Ovary (tissue), 10 donors: ENCODE measurements at regions of chr12 and their contacts with region 1.

Region 1: GRCh38 chr12:14854586-14855183 is 11.4 kb upstream of the ART4 start:
- DNase-seq: no peak
- H3K4me3 ChIP-seq: no peak overlapping the region
- H3K27ac ChIP-seq: peak overlapping the region in 1 of 2 donors; percentile 16
- H3K4me1 ChIP-seq: peaks cover 5% of the 10 kb centered on the region
- H3K27me3 ChIP-seq: no peaks in the 10 kb centered on the region
- CTCF ChIP-seq: no peak
- EP300 ChIP-seq: no peak
- POLR2A ChIP-seq: no peak

Region 2: DNA sequence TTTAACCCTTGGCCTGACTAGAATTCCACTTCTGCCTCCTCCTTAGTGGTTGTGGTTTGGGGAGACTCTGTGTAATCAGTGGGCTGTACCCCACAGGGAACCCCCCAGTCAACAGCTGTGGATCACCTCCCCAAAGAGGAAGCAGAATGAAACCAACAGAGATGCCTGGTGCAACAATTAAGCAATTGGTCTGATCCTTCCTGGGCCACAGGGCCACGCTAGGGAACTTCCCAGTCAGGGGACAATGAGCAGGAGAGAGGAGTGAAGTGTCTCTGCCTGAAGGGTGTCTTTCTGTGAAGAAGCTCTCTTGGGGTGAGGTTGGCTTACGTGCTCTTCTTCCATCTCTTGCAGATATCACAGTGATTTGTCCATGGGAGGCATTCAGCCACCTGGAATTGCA is 126.4 kb after region 1 on chr12:
- intact Hi-C with region 1: loop called in 1 of 4 experiments (anchors 5 kb)
- DNase-seq: no peak
- H3K4me3 ChIP-seq: no peak overlapping the region
- H3K27ac ChIP-seq: no peak overlapping the region
- H3K4me1 ChIP-seq: no peaks in the 10 kb centered on the region
- H3K27me3 ChIP-seq: no peaks in the 10 kb centered on the region
- CTCF ChIP-seq: no peak
- EP300 ChIP-seq: no peak
- POLR2A ChIP-seq: no peak